A673 (cell line): ENCODE measurements at regions of chr9 and their contacts with region 1.

Region 1: DNA sequence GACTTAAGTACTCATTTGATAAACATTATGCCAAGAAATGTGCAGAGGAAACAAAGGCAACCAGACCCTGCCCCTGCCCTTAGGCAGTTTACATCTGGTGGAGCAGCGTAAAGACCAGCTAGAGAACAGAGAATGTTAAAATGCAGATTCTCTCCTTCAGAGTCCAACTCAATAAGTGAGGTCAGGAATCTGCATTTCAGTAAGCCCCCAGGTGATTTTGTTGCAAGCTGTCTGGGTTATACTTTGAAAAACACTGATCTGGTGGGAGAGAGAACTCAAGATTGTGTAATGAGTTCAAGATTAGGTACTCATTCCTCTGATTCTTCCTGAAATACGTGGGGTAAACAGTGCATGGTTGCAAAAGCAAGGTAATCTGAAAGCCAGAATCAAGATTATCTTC is 34.6 kb upstream of the PRXL2C start:
- DNase-seq: no peak
- H3K4me3 ChIP-seq: no peak overlapping the region
- H3K27ac ChIP-seq: no peak overlapping the region
- H3K4me1 ChIP-seq: no peaks in the 10 kb centered on the region
- H3K27me3 ChIP-seq: no peaks in the 10 kb centered on the region
- CTCF ChIP-seq: no peak

Region 2: GRCh38 chr9:96441798-96442445 is 247.8 kb before region 1 on chr9:
- CTCF ChIA-PET with region 1: no interaction called
- POLR2A ChIA-PET with region 1: no interaction called
- intact Hi-C with region 1: no loop called
- DNase-seq: peak; percentile 62
- H3K4me3 ChIP-seq: no peak overlapping the region
- H3K27ac ChIP-seq: no peak overlapping the region
- H3K4me1 ChIP-seq: no peaks in the 10 kb centered on the region
- H3K27me3 ChIP-seq: no peaks in the 10 kb centered on the region
- CTCF ChIP-seq: peak; percentile 49

Region 3: DNA sequence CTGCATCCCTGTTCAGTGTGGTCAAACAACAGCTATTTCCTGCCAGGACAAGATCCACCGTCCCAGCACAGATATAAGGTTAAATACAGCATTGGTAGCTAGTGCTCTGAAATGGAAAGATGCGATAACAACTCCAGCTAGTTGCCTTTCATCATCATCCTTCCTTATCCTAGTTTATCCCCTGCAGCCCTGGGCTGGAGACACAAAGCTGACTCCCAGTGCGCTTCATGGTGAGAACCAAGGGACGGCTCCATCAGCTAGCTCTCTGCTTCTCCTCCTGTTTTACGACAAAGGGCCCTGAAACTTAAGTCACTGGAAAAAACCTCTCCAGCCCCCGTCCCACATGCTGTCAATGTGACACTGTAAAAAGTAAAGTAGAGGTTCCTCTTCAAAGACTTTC is 107.9 kb before region 1 on chr9:
- CTCF ChIA-PET with region 1: no interaction called
- POLR2A ChIA-PET with region 1: no interaction called
- intact Hi-C with region 1: no loop called
- DNase-seq: no peak
- H3K4me3 ChIP-seq: no peak overlapping the region
- H3K27ac ChIP-seq: no peak overlapping the region
- H3K4me1 ChIP-seq: no peaks in the 10 kb centered on the region
- H3K27me3 ChIP-seq: no peaks in the 10 kb centered on the region
- CTCF ChIP-seq: no peak

Region 4: GRCh38 chr9:97052735-97053134 is 363.0 kb after region 1 on chr9:
- CTCF ChIA-PET with region 1: no interaction called
- POLR2A ChIA-PET with region 1: interaction called, 27 read pairs
- intact Hi-C with region 1: no loop called
- DNase-seq: no peak
- H3K4me3 ChIP-seq: no peak overlapping the region
- H3K27ac ChIP-seq: no peak overlapping the region
- H3K4me1 ChIP-seq: peaks cover 26% of the 10 kb centered on the region
- H3K27me3 ChIP-seq: no peaks in the 10 kb centered on the region
- CTCF ChIP-seq: no peak